ENCODE measurements at regions of chr7 and their contacts with region 1.

Region 1: GRCh38 chr7:53350241-53350640 is 314.8 kb downstream of the POM121L12 start:
- DNase-seq: peak; percentile 27
- H3K4me3 ChIP-seq: no peak overlapping the region
- H3K27ac ChIP-seq: no peak overlapping the region
- H3K4me1 ChIP-seq: no peaks in the 10 kb centered on the region
- H3K27me3 ChIP-seq: no peaks in the 10 kb centered on the region
- CTCF ChIP-seq: peak in 4 of 5 experiments; percentile 13 to 32 (median 18)
- EP300 ChIP-seq: no peak
- POLR2A ChIP-seq: no peak

Region 2: DNA sequence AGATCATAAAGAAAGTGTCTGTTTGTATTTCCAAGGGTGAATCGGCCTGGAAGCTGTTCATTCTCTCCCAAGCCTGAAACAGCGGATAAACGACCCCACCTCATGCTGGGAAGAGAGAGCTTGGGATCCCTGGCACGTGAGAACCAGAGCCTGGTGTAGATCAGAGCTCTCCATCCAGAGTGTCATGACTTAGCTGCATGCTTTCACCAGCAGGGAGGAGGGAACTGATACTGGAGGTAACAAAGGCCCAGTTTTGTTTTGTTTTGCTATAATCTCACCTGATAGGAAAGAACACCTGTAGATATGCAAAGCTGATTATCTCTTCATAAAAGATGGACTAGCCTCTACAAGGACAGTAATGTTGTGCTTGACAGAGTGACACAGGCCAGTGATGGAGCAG is 78.2 kb before region 1 on chr7:
- in situ Hi-C with region 1: loop called in 1 of 4 experiments (anchors 25 kb)
- intact Hi-C with region 1: no loop called
- DNase-seq: no peak
- H3K4me3 ChIP-seq: no peak overlapping the region
- H3K27ac ChIP-seq: no peak overlapping the region
- H3K4me1 ChIP-seq: no peaks in the 10 kb centered on the region
- H3K27me3 ChIP-seq: no peaks in the 10 kb centered on the region
- CTCF ChIP-seq: no peak
- EP300 ChIP-seq: no peak
- POLR2A ChIP-seq: no peak

Measured in transverse colon (tissue), 4 donors.